ENCODE measurements at regions of chr19 and their contacts with region 1.

Region 1: DNA sequence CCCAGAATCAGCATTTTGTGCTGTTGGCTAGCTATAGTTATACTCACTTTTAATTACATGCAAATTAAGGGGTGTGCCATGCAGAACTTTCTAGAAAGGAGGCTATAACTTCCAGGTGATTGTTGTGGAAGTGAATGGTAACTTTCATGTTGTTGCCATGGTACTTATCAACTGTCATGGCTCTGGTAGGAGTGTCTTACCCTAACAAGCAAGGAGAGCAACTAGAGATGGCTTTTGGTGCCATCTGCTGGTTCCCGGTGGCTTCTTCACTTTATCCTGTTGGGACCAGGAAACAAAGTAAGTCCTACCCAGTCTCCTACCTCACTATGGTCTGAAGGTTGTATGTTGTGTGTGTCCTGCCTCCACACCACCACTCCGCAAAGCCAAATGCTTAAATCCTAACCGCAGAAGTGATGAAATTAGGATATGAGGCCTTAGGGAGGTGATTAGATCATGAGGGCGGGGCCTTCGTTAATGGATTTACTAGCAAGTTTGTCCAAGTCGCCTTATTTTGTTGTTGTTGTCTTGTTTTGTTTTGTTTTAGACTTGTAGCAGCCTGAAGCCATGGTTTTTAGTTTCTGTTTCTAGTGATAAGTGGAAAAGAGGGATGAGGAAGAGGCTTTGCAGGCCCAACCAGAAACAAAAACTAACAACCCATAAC is 22.6 kb downstream of the FBXL12 start:
- DNase-seq: peak; percentile 16
- H3K4me3 ChIP-seq: no peak overlapping the region
- H3K27ac ChIP-seq: peak overlapping the region; percentile 7 to 79 (median 56)
- H3K4me1 ChIP-seq: peaks cover 0 to 40% (median 3%) of the 10 kb centered on the region in 3 donors
- H3K27me3 ChIP-seq: no peaks in the 10 kb centered on the region
- CTCF ChIP-seq: peak; percentile 67 to 87 (median 82)
- POLR2A ChIP-seq: no peak

Region 2: DNA sequence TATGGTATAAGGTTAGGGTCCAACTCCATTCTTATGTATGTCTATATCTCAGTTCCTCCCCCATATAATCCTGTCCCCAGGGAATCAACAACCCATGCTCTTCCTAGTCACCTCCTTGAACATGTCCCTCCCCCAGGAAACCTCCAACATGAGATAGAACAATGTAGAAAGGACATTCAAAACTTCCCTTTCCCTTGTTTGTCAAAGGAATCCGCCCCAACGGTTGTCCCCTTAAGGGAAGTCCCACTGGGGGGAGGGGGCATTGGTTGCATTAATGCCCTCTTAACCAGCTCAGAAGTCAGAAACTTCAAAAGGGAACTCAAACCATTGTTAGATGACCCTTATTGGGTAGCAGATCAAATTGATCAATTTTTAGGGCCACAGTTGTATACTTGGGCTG is 168.4 kb before region 1 on chr19:
- intact Hi-C with region 1: loop called (anchors 5 kb)
- DNase-seq: no peak
- H3K4me3 ChIP-seq: no peak overlapping the region
- H3K27ac ChIP-seq: no peak overlapping the region
- H3K4me1 ChIP-seq: peaks cover 0 to 17% (median 8%) of the 10 kb centered on the region in 3 donors
- H3K27me3 ChIP-seq: no peaks in the 10 kb centered on the region
- CTCF ChIP-seq: no peak
- POLR2A ChIP-seq: no peak

Region 3: GRCh38 chr19:9885077-9885552 is 88.9 kb after region 1 on chr19:
- intact Hi-C with region 1: no loop called
- DNase-seq: no peak
- H3K4me3 ChIP-seq: no peak overlapping the region
- H3K27ac ChIP-seq: no peak overlapping the region
- H3K4me1 ChIP-seq: peaks cover 0 to 15% (median 10%) of the 10 kb centered on the region in 3 donors
- H3K27me3 ChIP-seq: peaks cover 0 to 4% (median 0%) of the 10 kb centered on the region in 4 donors
- CTCF ChIP-seq: peak in 1 of 6 experiments; percentile 24
- POLR2A ChIP-seq: no peak

Region 4: DNA sequence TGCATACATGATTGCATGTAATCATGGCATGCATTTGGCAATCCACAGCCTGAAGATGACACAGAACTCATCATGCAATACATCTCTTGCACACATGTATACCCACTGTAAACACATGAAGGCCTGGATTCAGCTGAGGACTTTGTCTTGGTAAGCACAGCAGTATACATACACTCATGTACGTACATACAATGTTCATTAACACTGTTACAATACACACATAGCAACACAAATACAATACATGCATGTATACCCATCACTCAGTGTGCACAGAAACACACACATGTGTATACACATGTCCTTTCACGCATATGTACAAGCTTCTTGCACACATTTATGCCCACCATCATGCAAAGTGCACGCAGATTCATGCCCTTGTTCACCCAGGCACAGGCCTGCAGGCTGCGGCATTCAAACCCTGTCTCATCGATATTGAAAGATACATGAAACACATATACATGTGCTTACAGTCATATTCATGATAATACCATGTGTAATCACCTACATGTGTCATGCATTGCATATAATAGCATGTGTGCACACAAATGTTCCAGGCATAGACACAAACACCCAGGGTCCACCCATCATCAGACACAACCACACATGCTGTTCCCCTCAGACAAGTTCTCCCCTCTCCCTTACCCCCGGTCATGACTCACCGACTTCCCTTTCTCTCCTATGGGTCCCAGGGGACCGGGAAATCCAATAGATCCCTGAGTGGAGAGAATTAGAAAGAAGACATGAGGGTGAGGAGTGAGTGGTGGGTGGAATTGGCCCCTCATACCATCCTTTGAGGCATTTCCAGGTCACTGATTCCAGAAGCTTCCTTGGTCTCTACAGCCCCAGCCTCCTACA is 185.4 kb after region 1 on chr19:
- intact Hi-C with region 1: no loop called
- DNase-seq: no peak
- H3K4me3 ChIP-seq: no peak overlapping the region
- H3K27ac ChIP-seq: no peak overlapping the region
- H3K4me1 ChIP-seq: peaks cover 0 to 5% (median 0%) of the 10 kb centered on the region in 3 donors
- H3K27me3 ChIP-seq: no peaks in the 10 kb centered on the region
- CTCF ChIP-seq: no peak
- POLR2A ChIP-seq: no peak